PC-3 (cell line): ENCODE measurements at regions of chr6 and their contacts with region 1.

Region 1: DNA sequence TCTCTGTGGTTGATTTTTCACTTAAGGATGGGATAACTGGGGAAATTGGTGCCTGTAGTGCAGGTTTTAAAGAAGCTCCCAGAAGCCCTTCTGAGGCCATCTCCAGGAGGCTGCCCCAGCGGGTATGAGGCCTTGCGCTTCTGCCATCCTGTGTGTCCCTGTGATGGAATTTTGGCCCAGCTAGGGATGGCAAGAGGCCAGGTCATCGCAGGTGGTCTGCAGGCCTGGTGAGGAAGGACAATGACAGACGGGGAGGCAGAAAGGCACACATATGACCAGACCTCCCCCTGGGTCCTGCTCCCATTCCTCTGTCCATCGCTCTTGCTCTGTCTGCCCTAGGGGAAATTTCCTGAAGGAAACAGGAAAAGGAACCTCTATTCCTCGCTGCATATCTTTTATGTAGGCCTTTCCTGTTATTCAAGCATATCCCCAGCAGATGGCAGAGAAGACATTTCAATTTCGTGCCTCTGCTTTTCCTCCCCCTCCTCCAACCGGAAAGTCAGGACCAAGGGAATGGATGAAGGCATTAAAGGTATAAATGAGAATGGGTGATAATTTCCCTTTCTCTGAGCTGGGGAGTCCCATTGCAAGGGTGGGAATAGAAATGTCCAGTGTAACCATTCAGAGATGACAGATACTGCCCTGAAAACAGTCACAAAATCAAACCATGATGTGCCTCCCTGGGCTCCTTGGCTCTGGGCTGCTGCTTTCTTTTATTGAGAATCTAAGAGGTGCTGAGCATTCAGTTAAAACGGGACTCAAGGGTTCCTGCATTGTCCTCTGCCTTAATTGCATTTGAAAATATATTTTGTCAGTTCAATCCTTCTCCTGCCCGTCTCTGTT is 17.6 kb upstream of the HLA-F start:
- DNase-seq: peak; percentile 78
- ATAC-seq: peak; percentile 73
- H3K4me3 ChIP-seq: no peak overlapping the region
- H3K27ac ChIP-seq: no peak overlapping the region
- H3K4me1 ChIP-seq: no peaks in the 10 kb centered on the region
- H3K27me3 ChIP-seq: peaks cover 24% of the 10 kb centered on the region
- CTCF ChIP-seq: peak; percentile 78

Region 2: GRCh38 chr6:29834564-29835436 is 129.2 kb after region 1 on chr6:
- CTCF ChIA-PET with region 1: no interaction called
- POLR2A ChIA-PET with region 1: no interaction called
- intact Hi-C with region 1: loop called (anchors 1 kb)
- DNase-seq: peak; percentile 62
- ATAC-seq: peak; percentile 70
- H3K4me3 ChIP-seq: no peak overlapping the region
- H3K27ac ChIP-seq: no peak overlapping the region
- H3K4me1 ChIP-seq: no peaks in the 10 kb centered on the region
- H3K27me3 ChIP-seq: peaks cover 5% of the 10 kb centered on the region
- CTCF ChIP-seq: peak; percentile 90

Region 3: DNA sequence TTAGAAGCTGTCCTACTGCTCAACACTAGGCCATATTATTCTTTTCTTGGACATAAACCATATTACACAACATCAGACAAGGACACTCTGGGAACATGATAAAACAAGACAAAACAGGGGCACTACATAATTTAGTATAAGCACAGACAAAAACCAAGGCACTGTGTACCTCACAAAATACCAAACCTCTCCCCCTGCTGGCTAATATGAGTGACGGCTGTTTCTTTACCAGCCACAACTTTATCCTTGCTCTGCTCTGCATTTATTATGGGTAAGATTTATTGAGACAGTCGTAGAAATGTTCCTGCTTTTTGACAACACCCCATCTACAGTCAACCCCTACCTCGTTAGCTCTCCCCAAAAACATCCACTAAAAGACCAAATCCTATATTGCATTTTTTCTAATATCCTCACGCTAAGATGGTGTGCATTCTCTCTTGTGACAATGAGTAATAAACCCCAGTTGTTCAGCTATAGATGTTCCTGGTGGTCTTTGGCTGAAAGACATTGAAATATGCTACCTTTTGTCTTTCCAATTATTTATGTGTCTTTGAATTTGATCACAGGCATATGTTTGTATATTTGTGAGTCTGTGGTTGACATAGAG is 331.7 kb after region 1 on chr6:
- CTCF ChIA-PET with region 1: no interaction called
- POLR2A ChIA-PET with region 1: no interaction called
- intact Hi-C with region 1: loop called (anchors 10 kb)
- DNase-seq: peak; percentile 51
- ATAC-seq: peak; percentile 86
- H3K4me3 ChIP-seq: no peak overlapping the region
- H3K27ac ChIP-seq: no peak overlapping the region
- H3K4me1 ChIP-seq: no peaks in the 10 kb centered on the region
- H3K27me3 ChIP-seq: no peaks in the 10 kb centered on the region
- CTCF ChIP-seq: peak; percentile 77